H1 (cell line): ENCODE measurements at regions of chr2 and their contacts with region 1.

Region 1: GRCh38 chr2:71460595-71461303 is 7.4 kb downstream of the DYSF start:
- DNase-seq: peak in 1 of 2 experiments; percentile 67
- H3K4me3 ChIP-seq: no peak overlapping the region
- H3K27ac ChIP-seq: no peak overlapping the region
- H3K4me1 ChIP-seq: peaks cover 8 to 29% (median 17%) of the 10 kb centered on the region in 4 experiments
- H3K27me3 ChIP-seq: peaks cover 24 to 66% (median 57%) of the 10 kb centered on the region in 4 experiments
- CTCF ChIP-seq: peak in 2 of 3 experiments; percentile 47 to 48; a peak in 2 of 4 replicates
- EP300 ChIP-seq: no peak
- POLR2A ChIP-seq: no peak
- RAD21 ChIP-seq: peak; percentile 53 to 57

Region 2: DNA sequence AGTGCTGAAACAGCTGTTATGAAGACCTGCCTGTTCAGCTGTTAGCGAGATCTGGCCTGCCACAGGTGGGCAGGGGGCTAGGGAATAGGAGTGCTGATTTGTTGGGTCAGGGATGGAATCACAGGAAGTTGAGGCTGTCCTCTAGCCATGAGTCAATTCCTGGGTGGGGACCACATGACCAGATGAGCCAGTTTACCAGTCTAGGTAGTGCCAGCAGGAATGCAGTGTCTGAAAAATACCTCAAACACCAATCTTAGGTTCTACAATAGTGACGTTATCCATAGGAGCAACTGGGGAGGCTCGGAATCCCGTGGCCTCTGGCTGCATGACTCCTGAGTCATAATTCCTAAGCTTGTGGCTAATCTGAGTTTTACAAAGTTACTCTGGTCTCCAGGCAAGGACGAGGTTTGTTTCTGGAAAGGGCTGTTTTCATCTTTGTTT is 37.5 kb after region 1 on chr2:
- CTCF ChIA-PET with region 1: interaction called, 238 read pairs
- POLR2A ChIA-PET with region 1: interaction called, 5 read pairs
- DNase-seq: no peak
- H3K4me3 ChIP-seq: no peak overlapping the region
- H3K27ac ChIP-seq: no peak overlapping the region
- H3K4me1 ChIP-seq: peaks cover 4 to 9% (median 6%) of the 10 kb centered on the region in 4 experiments; a peak in 6 of 7 replicates
- H3K27me3 ChIP-seq: no peaks in the 10 kb centered on the region
- CTCF ChIP-seq: no peak
- EP300 ChIP-seq: no peak
- POLR2A ChIP-seq: no peak
- RAD21 ChIP-seq: no peak

Region 3: DNA sequence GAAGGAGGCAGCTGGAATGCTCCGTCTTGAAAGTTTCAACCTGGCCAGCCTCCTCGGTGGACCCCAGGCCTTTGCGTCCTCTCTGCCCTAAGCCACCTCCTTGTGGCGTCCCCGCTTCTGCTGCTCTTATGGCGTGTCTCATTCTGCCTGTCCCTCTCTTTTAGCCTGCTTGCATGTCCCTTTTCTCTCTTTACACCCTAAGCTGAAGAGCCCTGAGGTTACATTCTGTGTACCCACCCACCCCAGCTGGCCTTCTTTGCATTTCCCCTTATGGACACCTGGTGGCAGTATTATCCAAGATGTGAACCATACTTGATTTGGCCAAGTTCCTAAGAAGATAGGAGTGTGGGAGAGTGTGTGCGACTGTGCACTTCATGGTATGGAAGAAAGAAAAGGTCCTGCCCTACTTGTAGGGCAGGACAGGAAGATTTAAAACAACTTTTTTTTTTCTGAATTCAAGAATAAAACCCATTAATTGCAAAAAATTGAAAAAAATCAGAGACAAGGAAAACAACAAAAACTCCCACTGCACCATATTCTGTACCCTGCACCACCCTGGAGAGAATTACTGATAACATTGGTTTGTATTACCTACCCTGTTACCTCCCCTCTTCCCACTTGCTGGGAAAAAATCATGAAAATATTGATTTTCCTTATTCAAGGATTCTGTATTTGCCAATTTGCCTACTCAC is 70.0 kb after region 1 on chr2:
- CTCF ChIA-PET with region 1: interaction called, 29 read pairs
- POLR2A ChIA-PET with region 1: no interaction called
- DNase-seq: peak; percentile 33 to 75
- H3K4me3 ChIP-seq: no peak overlapping the region
- H3K27ac ChIP-seq: no peak overlapping the region
- H3K4me1 ChIP-seq: peaks cover 0 to 11% (median 4%) of the 10 kb centered on the region in 4 experiments; a peak in 6 of 7 replicates
- H3K27me3 ChIP-seq: no peaks in the 10 kb centered on the region
- CTCF ChIP-seq: peak; percentile 54 to 87 (median 73)
- EP300 ChIP-seq: no peak
- POLR2A ChIP-seq: no peak
- RAD21 ChIP-seq: peak; percentile 81 to 91

Region 4: GRCh38 chr2:71592181-71592711 is 131.5 kb after region 1 on chr2:
- CTCF ChIA-PET with region 1: no interaction called
- POLR2A ChIA-PET with region 1: no interaction called
- DNase-seq: no peak
- H3K4me3 ChIP-seq: no peak overlapping the region
- H3K27ac ChIP-seq: no peak overlapping the region
- H3K4me1 ChIP-seq: peaks cover 0 to 7% (median 3%) of the 10 kb centered on the region in 4 experiments; a peak in 3 of 7 replicates
- H3K27me3 ChIP-seq: no peaks in the 10 kb centered on the region
- CTCF ChIP-seq: no peak
- EP300 ChIP-seq: no peak
- POLR2A ChIP-seq: no peak
- RAD21 ChIP-seq: no peak

Region 5: GRCh38 chr2:71631411-71631931 is 170.7 kb after region 1 on chr2:
- CTCF ChIA-PET with region 1: no interaction called
- POLR2A ChIA-PET with region 1: no interaction called
- DNase-seq: no peak
- H3K4me3 ChIP-seq: no peak overlapping the region
- H3K27ac ChIP-seq: no peak overlapping the region
- H3K4me1 ChIP-seq: peaks cover 0 to 6% (median 2%) of the 10 kb centered on the region in 4 experiments; a peak in 1 of 7 replicates
- H3K27me3 ChIP-seq: no peaks in the 10 kb centered on the region
- CTCF ChIP-seq: no peak
- EP300 ChIP-seq: no peak
- POLR2A ChIP-seq: no peak
- RAD21 ChIP-seq: no peak